ENCODE measurements at regions of chr5 and their contacts with region 1.

Region 1: DNA sequence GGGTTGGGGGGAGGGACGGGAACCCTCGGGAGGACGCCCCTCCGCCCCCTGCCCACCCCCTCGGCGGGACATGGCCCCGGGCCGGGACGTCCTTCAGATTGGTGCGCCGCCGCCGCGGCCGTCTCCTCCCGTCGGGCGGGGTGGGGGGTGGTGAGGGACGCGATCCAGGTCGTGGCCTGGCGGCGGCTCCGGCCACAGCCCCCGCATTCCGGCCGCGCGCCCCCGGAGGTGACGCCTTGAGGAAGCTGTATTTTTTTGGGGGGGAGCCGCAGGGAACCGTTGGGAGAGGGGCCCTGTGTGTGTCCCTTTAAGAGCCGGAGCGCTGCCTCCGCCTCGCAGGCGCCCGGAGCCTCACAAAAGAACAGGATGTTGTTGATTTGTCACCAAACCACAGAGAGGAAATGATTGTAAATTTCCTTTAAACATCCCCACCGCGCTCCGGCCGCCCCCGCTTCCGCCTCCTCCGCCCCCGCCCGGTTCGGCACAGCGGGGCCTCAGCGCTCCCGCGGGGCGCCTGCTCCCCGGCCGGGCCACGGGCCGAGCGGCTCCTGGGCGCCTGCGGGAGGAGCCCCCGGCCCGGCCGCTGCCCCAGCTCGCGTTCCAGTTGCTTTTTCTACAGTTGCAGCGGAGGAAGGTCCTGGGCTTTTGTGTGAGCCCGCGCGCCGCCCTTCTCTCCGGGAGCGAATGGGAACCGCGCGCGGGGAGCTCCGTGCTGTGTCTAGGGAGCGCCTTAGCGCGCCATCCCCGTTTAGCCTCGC is 32.1 kb upstream of the SPRY4 start:
- DNase-seq: peak; percentile 86 to 87
- ATAC-seq: peak; percentile 85
- H3K4me3 ChIP-seq: peak overlapping the region; percentile 68
- H3K27ac ChIP-seq: peak overlapping the region; percentile 98 to 99
- H3K4me1 ChIP-seq: peaks cover 31% of the 10 kb centered on the region
- CTCF ChIP-seq: no peak
- EP300 ChIP-seq: peak in 1 of 2 experiments; percentile 20; a peak in 1 of 5 replicates
- POLR2A ChIP-seq: peak; percentile 68
- RAD21 ChIP-seq: peak in 1 of 2 experiments; percentile 28; a peak in 2 of 5 replicates

Region 2: DNA sequence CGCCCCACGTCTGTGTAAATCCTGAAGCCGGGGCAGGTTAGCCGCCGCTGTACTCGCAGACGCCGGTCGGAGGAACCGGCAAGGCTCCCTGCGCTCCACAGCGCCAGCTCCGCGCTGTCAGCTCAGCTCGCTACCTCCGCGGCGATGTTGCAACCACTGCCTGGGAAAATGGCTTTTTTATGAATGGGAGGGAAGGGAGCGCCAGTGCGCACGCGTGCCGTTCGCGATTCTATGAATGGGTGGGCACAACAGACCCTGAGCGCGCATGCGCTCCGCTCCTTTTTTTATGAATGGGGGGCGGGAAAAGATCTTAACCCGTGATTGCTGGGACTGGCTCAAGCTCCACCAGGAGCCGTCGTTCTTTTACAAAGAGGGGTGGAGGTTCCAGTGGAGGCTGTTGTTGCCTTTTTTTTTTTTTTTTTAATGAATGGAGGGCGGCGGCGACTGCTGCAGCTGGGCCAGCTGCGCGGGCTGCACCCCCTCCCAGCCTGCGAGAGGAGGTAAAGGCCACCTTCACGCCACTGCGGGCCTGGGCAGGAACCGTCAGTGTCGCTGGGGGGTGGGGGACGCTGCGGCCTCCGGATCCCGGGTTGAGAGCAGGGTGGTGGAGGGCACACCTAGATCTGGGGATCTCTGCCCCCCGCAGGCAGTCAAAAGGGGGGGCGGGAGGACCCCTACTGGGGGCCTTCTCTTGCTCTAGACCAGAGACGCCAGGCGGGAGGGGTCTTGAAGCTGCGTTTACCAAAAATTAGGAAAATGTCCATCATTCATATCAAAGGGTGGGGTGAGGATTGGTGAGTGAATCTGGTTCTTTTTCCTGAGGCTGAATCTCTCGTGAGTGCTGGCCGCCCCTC is 31.8 kb before region 1 on chr5 and contains the start of gene SPRY4:
- CTCF ChIA-PET with region 1: interaction called, 6 read pairs
- POLR2A ChIA-PET with region 1: interaction called, 21 read pairs
- DNase-seq: peak; percentile 93 to 97
- ATAC-seq: peak; percentile 67 to 78
- H3K4me3 ChIP-seq: peak within 1 kb of the TSS; percentile 51
- H3K27ac ChIP-seq: peak within 1 kb of the TSS; percentile 89 to 100
- H3K4me1 ChIP-seq: peaks cover 45% of the 10 kb centered on the region
- CTCF ChIP-seq: peak; percentile 7; the same call in 1 of the 3 replicates
- EP300 ChIP-seq: no peak
- POLR2A ChIP-seq: peak; percentile 98
- RAD21 ChIP-seq: no peak; a peak in 1 of 5 replicates
- polyA plus RNA-seq, gene SPRY4: 5.7 and 6.7 TPM in 2 replicates

Region 3: DNA sequence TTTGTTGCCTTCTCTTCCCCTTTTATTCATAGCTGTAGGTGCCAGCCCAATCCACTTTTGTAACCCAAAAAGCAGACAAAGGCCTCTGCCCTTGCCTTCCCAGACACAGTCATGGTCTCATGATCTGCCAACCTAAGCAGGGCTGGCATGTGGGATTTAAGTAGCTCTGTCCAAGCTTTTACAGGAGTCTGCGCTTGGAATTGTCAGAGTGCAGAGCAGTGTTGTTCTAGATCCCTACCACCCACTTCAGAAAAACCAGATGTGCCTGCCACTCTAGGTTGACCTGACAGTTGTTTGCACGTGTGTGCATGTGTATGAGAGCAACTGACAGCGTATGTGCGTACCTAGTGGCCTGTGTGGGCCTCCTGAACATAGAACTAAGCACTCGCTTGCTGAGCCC is 55.7 kb after region 1 on chr5:
- CTCF ChIA-PET with region 1: no interaction called
- POLR2A ChIA-PET with region 1: no interaction called
- DNase-seq: no peak
- ATAC-seq: no peak
- H3K4me3 ChIP-seq: no peak overlapping the region
- H3K27ac ChIP-seq: no peak overlapping the region
- H3K4me1 ChIP-seq: no peaks in the 10 kb centered on the region
- CTCF ChIP-seq: no peak
- EP300 ChIP-seq: no peak
- POLR2A ChIP-seq: no peak
- RAD21 ChIP-seq: no peak